ENCODE measurements at regions of chr12 and their contacts with region 1.

Region 1: GRCh38 chr12:113174461-113175384 is 10.6 kb downstream of the DDX54 start:
- DNase-seq: peak; percentile 84
- H3K4me3 Mint-ChIP-seq: no peak overlapping the region
- H3K27ac Mint-ChIP-seq: no peak overlapping the region
- H3K4me1 Mint-ChIP-seq: peaks cover 2% of the 10 kb centered on the region
- H3K27me3 Mint-ChIP-seq: no peaks in the 10 kb centered on the region

Region 2: DNA sequence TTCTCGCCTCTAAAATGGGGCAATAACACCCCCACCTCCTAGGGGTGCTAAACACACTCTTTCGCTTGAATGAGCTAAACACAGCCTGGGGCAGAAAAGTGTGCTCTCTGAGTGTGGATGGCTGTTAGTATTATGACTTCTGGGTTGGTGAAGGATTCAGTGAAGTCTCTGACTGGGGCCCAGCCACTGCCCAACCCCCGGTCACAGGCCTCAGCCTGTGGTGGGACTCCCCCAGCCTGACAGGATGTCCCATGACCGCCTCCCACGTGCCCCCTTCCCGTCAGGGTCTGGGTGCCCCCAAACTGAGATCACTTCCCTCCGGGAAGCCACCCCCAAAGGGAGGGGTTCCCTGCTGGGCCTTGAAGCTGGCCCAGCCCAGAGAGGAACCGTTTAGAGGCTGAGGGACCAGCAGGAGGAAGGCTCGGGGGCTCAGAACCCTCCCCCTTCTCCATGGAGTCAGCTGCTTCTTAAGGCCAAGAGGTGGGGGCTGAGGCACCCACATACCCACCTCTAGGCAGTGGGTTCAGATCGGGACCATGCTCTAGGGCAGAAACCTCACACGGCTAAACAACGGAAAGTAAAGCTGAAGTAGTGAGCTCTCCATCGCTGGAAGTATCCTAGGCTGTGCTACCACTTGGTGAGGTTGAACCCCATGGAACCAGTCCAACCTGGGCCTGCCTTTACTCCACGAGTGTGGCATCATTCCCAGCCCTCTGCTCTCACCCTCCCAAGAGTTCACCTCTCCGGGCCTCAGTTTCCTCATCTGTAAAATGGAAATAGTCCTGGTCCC is 104.4 kb before region 1 on chr12:
- CTCF ChIA-PET with region 1: no interaction called
- POLR2A ChIA-PET with region 1: no interaction called
- intact Hi-C with region 1: no loop called
- DNase-seq: peak; percentile 86
- H3K4me3 Mint-ChIP-seq: peak overlapping the region; percentile 61
- H3K27ac Mint-ChIP-seq: peak overlapping the region; percentile 50
- H3K4me1 Mint-ChIP-seq: peaks cover 53% of the 10 kb centered on the region
- H3K27me3 Mint-ChIP-seq: no peaks in the 10 kb centered on the region

Region 3: GRCh38 chr12:113152835-113153814 is 21.6 kb before region 1 on chr12:
- CTCF ChIA-PET with region 1: interaction called, 17 read pairs
- POLR2A ChIA-PET with region 1: interaction called, 6 read pairs
- intact Hi-C with region 1: no loop called
- DNase-seq: peak; percentile 76
- H3K4me3 Mint-ChIP-seq: peak overlapping the region; percentile 73
- H3K27ac Mint-ChIP-seq: no peak overlapping the region
- H3K4me1 Mint-ChIP-seq: peaks cover 23% of the 10 kb centered on the region
- H3K27me3 Mint-ChIP-seq: peaks cover 8% of the 10 kb centered on the region

Region 4: DNA sequence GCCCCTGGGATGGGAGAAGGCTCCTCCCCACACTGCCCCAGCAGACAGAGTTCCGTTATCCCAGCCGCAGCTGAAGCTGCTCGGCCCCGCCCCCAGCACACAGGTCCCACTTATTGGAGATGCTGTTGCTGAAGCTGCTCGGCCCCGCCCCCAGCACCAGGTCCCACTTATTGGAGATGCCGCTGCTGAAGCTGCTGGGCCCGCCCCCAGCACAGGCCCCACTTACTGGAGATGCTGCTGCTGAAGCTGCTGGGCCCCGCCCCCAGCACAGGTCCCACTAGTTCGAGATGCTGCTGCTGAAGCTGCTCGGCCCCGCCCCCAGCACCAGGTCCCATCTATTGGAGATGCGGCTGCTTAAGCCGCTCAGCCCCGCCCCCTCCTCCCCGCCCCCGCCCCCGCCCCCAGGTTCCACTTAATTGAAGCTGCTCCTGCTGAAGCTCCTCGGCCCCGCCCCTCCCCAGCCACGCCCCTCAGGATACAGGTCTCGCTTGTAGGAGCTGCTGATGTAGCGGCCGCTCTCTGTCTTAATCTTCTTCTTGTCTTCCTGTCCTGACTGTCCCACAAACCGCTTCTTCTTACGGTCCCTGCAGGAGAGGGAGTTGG is 13.2 kb before region 1 on chr12:
- CTCF ChIA-PET with region 1: interaction called, 28 read pairs
- POLR2A ChIA-PET with region 1: no interaction called
- intact Hi-C with region 1: no loop called
- DNase-seq: peak; percentile 25
- H3K4me3 Mint-ChIP-seq: no peak overlapping the region
- H3K27ac Mint-ChIP-seq: no peak overlapping the region
- H3K4me1 Mint-ChIP-seq: peaks cover 9% of the 10 kb centered on the region
- H3K27me3 Mint-ChIP-seq: no peaks in the 10 kb centered on the region

Region 5: DNA sequence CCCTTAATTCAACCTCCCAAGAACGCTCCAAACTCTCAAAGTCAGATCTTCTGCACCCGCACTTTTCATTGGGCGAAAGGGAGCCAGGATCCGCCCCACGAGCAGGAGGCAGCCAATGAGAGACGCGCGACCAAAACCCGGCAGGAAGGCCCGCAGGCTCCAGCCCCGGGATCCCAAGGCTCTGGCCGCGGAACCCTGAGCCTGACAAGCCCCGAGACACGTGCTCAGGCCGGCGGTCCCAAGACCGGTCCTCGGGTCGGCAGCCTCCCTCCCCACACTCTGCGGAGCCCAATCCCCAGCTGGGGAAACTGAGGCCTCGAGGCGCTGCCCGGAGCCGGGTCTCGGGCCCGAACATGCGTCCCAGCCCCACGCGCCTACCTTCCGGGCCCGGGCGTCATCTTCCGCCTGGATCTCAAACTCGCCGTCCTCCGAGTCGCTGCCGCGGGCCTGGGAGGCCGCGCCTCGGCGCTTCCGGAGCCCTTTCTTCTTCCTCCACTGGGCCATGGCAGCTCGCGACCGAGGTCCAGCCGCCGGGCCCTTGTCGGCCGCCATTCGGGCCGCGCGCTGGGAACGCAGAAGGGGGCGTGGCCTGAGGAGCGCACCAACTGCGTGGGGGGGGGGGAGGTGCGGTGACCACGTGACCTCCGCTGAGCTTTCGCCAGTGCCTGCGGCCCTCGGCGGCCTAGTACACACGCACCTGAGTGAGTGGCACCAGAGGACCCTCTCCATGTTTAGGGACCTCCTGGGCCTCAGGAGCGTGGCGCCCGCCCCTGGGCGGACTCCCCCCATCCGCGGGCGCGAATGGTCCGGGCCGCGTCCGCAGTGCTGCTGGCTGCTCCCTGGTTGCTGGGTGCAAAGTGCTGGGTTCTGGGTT is 10.4 kb after region 1 on chr12 and contains the starts of genes DDX54 and RITA1:
- CTCF ChIA-PET with region 1: interaction called, 18 read pairs
- POLR2A ChIA-PET with region 1: no interaction called
- intact Hi-C with region 1: no loop called
- DNase-seq: peak; percentile 93
- H3K4me3 Mint-ChIP-seq: peak within 1 kb of the TSS; percentile 94
- H3K27ac Mint-ChIP-seq: peak within 1 kb of the TSS; percentile 93
- H3K4me1 Mint-ChIP-seq: peaks cover 24% of the 10 kb centered on the region
- H3K27me3 Mint-ChIP-seq: no peaks in the 10 kb centered on the region
- total RNA-seq, gene DDX54: 107 to 109 TPM
- total RNA-seq, gene RITA1: 18.7 to 22.0 TPM

Region 6: DNA sequence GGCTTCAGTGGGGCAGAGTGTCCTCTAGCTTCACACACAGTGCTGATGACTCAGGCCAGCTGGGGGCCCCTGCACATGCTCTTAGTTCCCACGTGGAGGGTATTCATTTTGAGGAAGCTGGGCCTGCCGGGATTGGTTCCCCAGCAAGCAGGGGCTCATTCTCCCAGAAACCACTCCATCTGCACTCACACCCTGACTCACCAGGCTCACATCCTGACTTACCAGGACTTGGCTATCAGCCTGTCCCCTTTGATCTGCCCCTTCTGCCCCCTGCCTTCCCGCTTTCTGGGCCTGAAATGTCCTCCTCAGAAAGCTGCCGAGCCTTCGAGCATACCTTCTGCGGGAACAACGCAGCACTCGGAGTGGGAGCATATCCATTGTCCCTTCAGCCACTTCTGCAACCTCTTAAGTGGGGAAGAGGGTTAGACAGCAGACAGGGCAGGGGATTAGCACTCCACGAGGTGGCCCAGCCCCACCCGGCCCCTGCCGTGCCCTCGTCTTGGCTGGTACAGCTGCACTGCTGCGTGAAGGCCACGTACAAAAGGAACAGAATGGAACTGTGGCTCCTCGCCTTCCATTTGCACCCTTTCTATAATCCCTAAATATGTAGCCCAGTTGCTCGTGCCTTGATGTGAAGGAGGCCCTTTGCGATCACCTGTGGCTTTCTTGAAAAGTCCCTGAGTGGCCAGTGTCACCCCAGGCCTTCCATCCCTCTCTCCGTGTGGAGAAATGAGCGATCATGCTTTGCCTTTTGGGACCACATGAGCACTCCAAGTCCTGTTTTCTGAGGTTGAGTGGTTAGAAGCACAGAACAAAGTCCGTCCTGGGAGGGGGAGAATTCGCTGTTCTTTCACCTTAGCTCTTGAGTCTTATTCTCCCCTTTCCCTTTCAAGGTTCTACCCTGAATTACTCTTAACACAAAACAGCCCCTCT is 72.7 kb after region 1 on chr12:
- CTCF ChIA-PET with region 1: no interaction called
- POLR2A ChIA-PET with region 1: no interaction called
- intact Hi-C with region 1: no loop called
- DNase-seq: no peak
- H3K4me3 Mint-ChIP-seq: no peak overlapping the region
- H3K27ac Mint-ChIP-seq: no peak overlapping the region
- H3K4me1 Mint-ChIP-seq: peaks cover 12% of the 10 kb centered on the region
- H3K27me3 Mint-ChIP-seq: no peaks in the 10 kb centered on the region